MCF 10A (cell line): ENCODE measurements at regions of chr22 and their contacts with region 1.

Region 1: GRCh38 chr22:50148991-50149721 is 21.4 kb upstream of the PANX2 start:
- DNase-seq: peak; percentile 89
- H3K4me3 Mint-ChIP-seq: peak overlapping the region; percentile 41
- H3K27ac Mint-ChIP-seq: no peak overlapping the region
- H3K4me1 Mint-ChIP-seq: peaks cover 7% of the 10 kb centered on the region
- H3K27me3 Mint-ChIP-seq: no peaks in the 10 kb centered on the region
- CTCF ChIP-seq: peak; percentile 94

Region 2: GRCh38 chr22:49767355-49768062 is 381.6 kb before region 1 on chr22:
- CTCF ChIA-PET with region 1: no interaction called
- POLR2A ChIA-PET with region 1: no interaction called
- intact Hi-C with region 1: loop called (anchors 5 kb)
- DNase-seq: peak; percentile 55
- H3K4me3 Mint-ChIP-seq: no peak overlapping the region
- H3K27ac Mint-ChIP-seq: no peak overlapping the region
- H3K4me1 Mint-ChIP-seq: no peaks in the 10 kb centered on the region
- H3K27me3 Mint-ChIP-seq: no peaks in the 10 kb centered on the region
- CTCF ChIP-seq: peak; percentile 65

Region 3: DNA sequence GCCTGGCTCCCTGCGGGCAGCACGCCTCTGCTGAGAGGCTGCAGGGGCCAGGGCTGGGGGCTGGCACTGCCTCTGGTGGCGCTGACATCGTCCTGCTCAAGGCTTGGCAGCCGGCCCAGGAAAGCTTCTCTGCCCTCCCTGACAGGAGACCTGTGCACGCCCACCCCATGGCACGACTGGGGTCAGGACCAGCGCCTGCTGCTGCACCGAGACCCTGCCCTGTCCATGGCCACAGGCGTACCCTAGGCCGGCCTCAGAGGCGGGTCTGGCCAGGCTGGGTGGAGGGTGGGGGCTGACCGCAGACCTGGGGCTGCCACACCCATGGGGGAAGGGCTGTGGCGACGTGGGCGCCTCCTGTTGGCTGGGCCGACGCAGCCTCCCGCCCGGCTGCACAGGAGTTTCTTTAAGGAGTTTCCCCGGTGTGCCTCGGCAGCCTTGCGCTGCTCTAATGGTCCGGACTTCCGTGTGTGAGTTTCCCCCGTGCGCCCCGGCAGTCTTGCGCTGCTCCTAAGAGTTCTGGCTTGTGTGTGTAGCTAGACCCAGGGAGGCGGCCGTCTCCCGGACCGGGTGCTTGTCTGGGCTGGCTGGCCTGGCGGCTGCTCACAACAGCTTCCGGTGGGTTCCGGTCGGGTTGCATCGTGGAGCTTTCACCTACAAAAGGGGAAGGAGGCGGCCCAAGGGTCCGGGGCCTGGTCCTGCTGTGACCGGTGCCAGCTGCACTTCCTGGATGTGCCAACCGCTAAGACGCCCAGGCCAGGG is 41.2 kb after region 1 on chr22:
- CTCF ChIA-PET with region 1: interaction called, 21 read pairs
- POLR2A ChIA-PET with region 1: interaction called, 7 read pairs
- intact Hi-C with region 1: loop called (anchors 1 kb)
- DNase-seq: peak; percentile 83
- H3K4me3 Mint-ChIP-seq: peak overlapping the region; percentile 73
- H3K27ac Mint-ChIP-seq: peak overlapping the region; percentile 69
- H3K4me1 Mint-ChIP-seq: peaks cover 5% of the 10 kb centered on the region
- H3K27me3 Mint-ChIP-seq: no peaks in the 10 kb centered on the region
- CTCF ChIP-seq: peak; percentile 48

Region 4: GRCh38 chr22:50215297-50216054 is 66.3 kb after region 1 on chr22:
- CTCF ChIA-PET with region 1: interaction called, 19 read pairs
- POLR2A ChIA-PET with region 1: no interaction called
- intact Hi-C with region 1: no loop called
- DNase-seq: no peak
- H3K4me3 Mint-ChIP-seq: no peak overlapping the region
- H3K27ac Mint-ChIP-seq: no peak overlapping the region
- H3K4me1 Mint-ChIP-seq: no peaks in the 10 kb centered on the region
- H3K27me3 Mint-ChIP-seq: no peaks in the 10 kb centered on the region
- CTCF ChIP-seq: no peak

Region 5: GRCh38 chr22:50498322-50498890 is 349.2 kb after region 1 on chr22:
- CTCF ChIA-PET with region 1: interaction called, 3 read pairs
- POLR2A ChIA-PET with region 1: no interaction called
- intact Hi-C with region 1: loop called (anchors 10 kb)
- DNase-seq: peak; percentile 84
- H3K4me3 Mint-ChIP-seq: no peak overlapping the region
- H3K27ac Mint-ChIP-seq: no peak overlapping the region
- H3K4me1 Mint-ChIP-seq: peaks cover 7% of the 10 kb centered on the region
- H3K27me3 Mint-ChIP-seq: no peaks in the 10 kb centered on the region
- CTCF ChIP-seq: peak; percentile 64